Heart right ventricle (tissue), 16 donors: ENCODE measurements at regions of chr15 and their contacts with region 1.

Region 1: DNA sequence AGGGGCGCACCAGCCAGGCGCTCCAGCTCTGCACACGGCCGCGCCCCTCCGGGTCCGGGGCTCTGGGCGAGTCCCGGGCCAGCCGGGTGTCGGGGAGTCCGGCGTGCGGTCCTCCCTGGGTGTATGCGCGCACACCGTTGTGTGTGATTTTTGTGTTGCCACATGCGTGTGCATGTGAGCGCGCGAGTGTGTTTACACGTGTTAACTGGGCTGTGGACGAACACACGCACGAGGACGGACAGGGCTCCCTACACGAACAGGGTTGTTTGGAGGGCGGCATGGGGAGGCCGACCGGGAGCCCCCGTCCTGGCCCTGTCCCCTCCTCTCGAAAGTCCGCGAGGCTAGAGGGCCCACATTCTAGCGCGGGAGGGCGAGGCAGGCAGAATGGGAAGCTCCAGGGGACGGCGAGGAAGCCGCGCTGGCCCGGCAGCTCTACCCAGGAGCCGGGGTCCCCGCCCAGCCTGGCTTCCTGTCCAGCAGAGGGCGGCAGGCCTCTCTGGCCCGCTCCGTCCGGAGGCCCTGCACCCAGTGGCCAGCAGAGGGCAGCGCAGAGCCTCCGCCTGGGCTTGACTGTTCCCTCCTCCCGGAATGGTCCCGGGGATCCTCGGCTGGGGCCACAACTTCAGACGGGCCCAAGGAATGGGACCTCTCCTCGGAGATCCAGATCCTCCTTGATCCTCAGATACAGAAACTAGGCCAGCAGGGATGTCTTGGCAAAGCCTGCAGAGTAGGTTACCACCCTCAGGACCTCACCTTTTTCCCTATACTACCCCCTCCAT is 611 bp upstream of the LINGO1 start:
- DNase-seq: peak; percentile 90 to 91
- ATAC-seq: peak; percentile 92 to 98 (median 96)
- H3K4me3 ChIP-seq: peak overlapping the region; percentile 46 to 74 (median 60)
- H3K27ac ChIP-seq: peak overlapping the region in 7 of 10 donors; percentile 10 to 57 (median 46)
- H3K4me1 ChIP-seq: peaks cover 3 to 37% (median 20%) of the 10 kb centered on the region in 9 donors
- H3K27me3 ChIP-seq: peaks cover 0 to 78% (median 37%) of the 10 kb centered on the region in 7 donors
- CTCF ChIP-seq: peak in 7 of 9 donors; percentile 100

Region 2: GRCh38 chr15:77107531-77108355 is 525.6 kb before region 1 on chr15:
- intact Hi-C with region 1: loop called in 2 of 10 experiments (anchors 5 to 10 kb)
- DNase-seq: peak; percentile 51 to 65
- ATAC-seq: peak; percentile 46 to 82 (median 76)
- H3K4me3 ChIP-seq: no peak overlapping the region
- H3K27ac ChIP-seq: peak overlapping the region in 8 of 10 donors; percentile 4 to 73 (median 61)
- H3K4me1 ChIP-seq: peaks cover 20 to 74% (median 36%) of the 10 kb centered on the region in 9 donors
- H3K27me3 ChIP-seq: no peaks in the 10 kb centered on the region
- CTCF ChIP-seq: peak; percentile 39 to 77 (median 62)

Region 3: DNA sequence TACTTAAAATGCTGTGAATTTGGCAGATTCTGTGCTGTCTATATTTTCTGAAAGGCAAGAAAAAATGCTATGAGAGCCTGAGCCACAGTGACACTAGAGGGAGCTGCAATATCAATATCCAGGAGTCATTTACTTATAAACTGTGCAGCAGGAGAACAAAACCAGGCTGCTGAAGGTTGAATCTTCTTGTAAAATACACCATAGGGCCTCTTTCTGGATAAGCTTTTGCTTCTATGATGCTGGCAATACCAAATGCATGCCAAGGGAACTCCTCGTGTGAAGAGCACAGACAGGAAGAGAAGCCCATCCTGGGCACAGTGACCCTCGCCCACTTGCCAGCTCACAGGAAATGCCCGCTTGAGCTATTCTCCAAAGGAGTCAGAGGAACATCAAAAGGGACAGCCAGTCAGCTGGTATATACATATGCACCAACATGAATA is 514.4 kb before region 1 on chr15:
- intact Hi-C with region 1: loop called in 1 of 10 experiments (anchors 5 kb)
- DNase-seq: peak in 1 of 2 donors; percentile 60
- ATAC-seq: peak in 6 of 8 donors; percentile 71 to 82 (median 79)
- H3K4me3 ChIP-seq: no peak overlapping the region
- H3K27ac ChIP-seq: peak overlapping the region in 2 of 10 donors; percentile 3 to 38
- H3K4me1 ChIP-seq: peaks cover 0 to 40% (median 16%) of the 10 kb centered on the region in 9 donors
- H3K27me3 ChIP-seq: no peaks in the 10 kb centered on the region
- CTCF ChIP-seq: peak; percentile 59 to 89 (median 75)

Region 4: DNA sequence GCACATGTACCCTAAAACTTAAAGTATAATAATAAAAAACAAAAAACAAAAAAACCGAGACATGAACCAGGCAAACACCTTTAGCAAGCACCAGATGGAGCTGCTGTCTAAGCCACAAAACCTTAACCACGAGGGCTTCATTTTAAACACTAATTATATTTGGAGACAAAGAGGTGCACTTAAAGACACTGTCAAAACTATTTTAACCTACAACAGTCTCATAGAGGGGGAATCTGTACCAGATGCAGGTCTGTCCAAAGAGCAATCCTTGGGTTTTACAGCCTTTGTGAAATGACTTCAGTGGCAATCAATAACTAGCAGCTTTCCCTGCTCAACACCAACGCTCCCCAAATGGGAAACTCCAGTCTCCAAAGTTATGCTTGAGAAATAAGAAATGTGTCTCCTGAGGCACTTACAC is 446.7 kb before region 1 on chr15:
- intact Hi-C with region 1: loop called in 3 of 10 experiments (anchors 5 to 10 kb)
- DNase-seq: no peak
- ATAC-seq: peak in 7 of 8 donors; percentile 33 to 64 (median 43)
- H3K4me3 ChIP-seq: no peak overlapping the region
- H3K27ac ChIP-seq: peak overlapping the region; percentile 38 to 93 (median 80)
- H3K4me1 ChIP-seq: peaks cover 5 to 70% (median 55%) of the 10 kb centered on the region in 9 donors
- H3K27me3 ChIP-seq: no peaks in the 10 kb centered on the region
- CTCF ChIP-seq: peak; percentile 38 to 81 (median 63)

Region 5: GRCh38 chr15:77821188-77821958 is 188.1 kb after region 1 on chr15:
- intact Hi-C with region 1: loop called in 9 of 10 experiments (anchors 1 to 5 kb)
- DNase-seq: peak; percentile 48 to 54
- ATAC-seq: peak in 7 of 8 donors; percentile 60 to 87 (median 81)
- H3K4me3 ChIP-seq: no peak overlapping the region
- H3K27ac ChIP-seq: no peak overlapping the region
- H3K4me1 ChIP-seq: peaks cover 0 to 11% (median 4%) of the 10 kb centered on the region in 9 donors
- H3K27me3 ChIP-seq: peaks cover 17 to 69% (median 63%) of the 10 kb centered on the region in 7 donors
- CTCF ChIP-seq: peak; percentile 40 to 75 (median 64)